Activated CD8-positive, alpha-beta T cell treated with anti-CD3 and anti-CD28 coated beads for 36 hours (primary cell): ENCODE measurements at regions of chr15 and their contacts with region 1.

Region 1: GRCh38 chr15:100349696-100350433 is 8.1 kb upstream of the ADAMTS17 start:
- DNase-seq: peak; percentile 90
- ATAC-seq: peak; percentile 94
- H3K4me3 Mint-ChIP-seq: peak overlapping the region; percentile 85
- H3K27ac Mint-ChIP-seq: peak overlapping the region; percentile 92
- H3K4me1 Mint-ChIP-seq: peaks cover 5% of the 10 kb centered on the region
- H3K27me3 Mint-ChIP-seq: peaks cover 10% of the 10 kb centered on the region
- CTCF ChIP-seq: peak; percentile 96

Region 2: DNA sequence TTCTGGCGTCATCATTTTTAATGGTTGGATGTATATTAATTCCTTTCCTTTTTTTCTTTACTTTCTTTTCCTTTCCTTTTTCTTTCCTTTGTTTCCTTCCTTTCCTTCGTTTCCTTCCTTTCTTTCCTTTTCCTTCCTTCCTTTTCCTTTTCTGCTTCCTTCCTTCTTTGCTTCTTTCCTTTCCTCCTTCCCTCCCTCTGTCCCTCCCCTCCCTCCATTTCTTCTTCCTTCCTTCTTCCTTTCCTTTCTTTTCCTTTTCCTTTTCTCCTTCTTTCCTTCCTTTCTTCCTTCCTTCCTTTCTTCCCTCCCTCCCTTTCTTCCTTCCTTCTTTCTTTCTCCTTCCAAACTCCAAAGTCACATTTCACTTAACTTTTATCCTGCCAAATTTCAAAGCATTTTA is 561.7 kb before region 1 on chr15:
- CTCF ChIA-PET with region 1: no interaction called
- POLR2A ChIA-PET with region 1: no interaction called
- intact Hi-C with region 1: no loop called
- DNase-seq: no peak
- ATAC-seq: no peak
- H3K4me3 Mint-ChIP-seq: no peak overlapping the region
- H3K27ac Mint-ChIP-seq: no peak overlapping the region
- H3K4me1 Mint-ChIP-seq: no peaks in the 10 kb centered on the region
- H3K27me3 Mint-ChIP-seq: peaks cover 10% of the 10 kb centered on the region
- CTCF ChIP-seq: no peak

Region 3: GRCh38 chr15:100111103-100112060 is 238.5 kb before region 1 on chr15:
- CTCF ChIA-PET with region 1: interaction called, 10 read pairs
- POLR2A ChIA-PET with region 1: no interaction called
- intact Hi-C with region 1: no loop called
- DNase-seq: peak; percentile 72
- ATAC-seq: peak; percentile 94
- H3K4me3 Mint-ChIP-seq: peak overlapping the region; percentile 44
- H3K27ac Mint-ChIP-seq: peak overlapping the region; percentile 98
- H3K4me1 Mint-ChIP-seq: peaks cover 36% of the 10 kb centered on the region
- H3K27me3 Mint-ChIP-seq: no peaks in the 10 kb centered on the region
- CTCF ChIP-seq: no peak

Region 4: GRCh38 chr15:100147828-100148227 is 202.0 kb before region 1 on chr15:
- CTCF ChIA-PET with region 1: no interaction called
- POLR2A ChIA-PET with region 1: no interaction called
- intact Hi-C with region 1: no loop called
- DNase-seq: no peak
- ATAC-seq: no peak
- H3K4me3 Mint-ChIP-seq: no peak overlapping the region
- H3K27ac Mint-ChIP-seq: no peak overlapping the region
- H3K4me1 Mint-ChIP-seq: no peaks in the 10 kb centered on the region
- H3K27me3 Mint-ChIP-seq: no peaks in the 10 kb centered on the region
- CTCF ChIP-seq: no peak

Region 5: GRCh38 chr15:100241572-100242482 is 108.0 kb before region 1 on chr15:
- CTCF ChIA-PET with region 1: no interaction called
- POLR2A ChIA-PET with region 1: no interaction called
- intact Hi-C with region 1: no loop called
- DNase-seq: no peak
- ATAC-seq: no peak
- H3K4me3 Mint-ChIP-seq: no peak overlapping the region
- H3K27ac Mint-ChIP-seq: peak overlapping the region; percentile 28
- H3K4me1 Mint-ChIP-seq: no peaks in the 10 kb centered on the region
- H3K27me3 Mint-ChIP-seq: no peaks in the 10 kb centered on the region
- CTCF ChIP-seq: no peak

Region 6: GRCh38 chr15:100279446-100279845 is 70.4 kb before region 1 on chr15:
- CTCF ChIA-PET with region 1: no interaction called
- POLR2A ChIA-PET with region 1: no interaction called
- intact Hi-C with region 1: no loop called
- DNase-seq: no peak
- ATAC-seq: no peak
- H3K4me3 Mint-ChIP-seq: no peak overlapping the region
- H3K27ac Mint-ChIP-seq: no peak overlapping the region
- H3K4me1 Mint-ChIP-seq: no peaks in the 10 kb centered on the region
- H3K27me3 Mint-ChIP-seq: no peaks in the 10 kb centered on the region
- CTCF ChIP-seq: no peak

Region 7: DNA sequence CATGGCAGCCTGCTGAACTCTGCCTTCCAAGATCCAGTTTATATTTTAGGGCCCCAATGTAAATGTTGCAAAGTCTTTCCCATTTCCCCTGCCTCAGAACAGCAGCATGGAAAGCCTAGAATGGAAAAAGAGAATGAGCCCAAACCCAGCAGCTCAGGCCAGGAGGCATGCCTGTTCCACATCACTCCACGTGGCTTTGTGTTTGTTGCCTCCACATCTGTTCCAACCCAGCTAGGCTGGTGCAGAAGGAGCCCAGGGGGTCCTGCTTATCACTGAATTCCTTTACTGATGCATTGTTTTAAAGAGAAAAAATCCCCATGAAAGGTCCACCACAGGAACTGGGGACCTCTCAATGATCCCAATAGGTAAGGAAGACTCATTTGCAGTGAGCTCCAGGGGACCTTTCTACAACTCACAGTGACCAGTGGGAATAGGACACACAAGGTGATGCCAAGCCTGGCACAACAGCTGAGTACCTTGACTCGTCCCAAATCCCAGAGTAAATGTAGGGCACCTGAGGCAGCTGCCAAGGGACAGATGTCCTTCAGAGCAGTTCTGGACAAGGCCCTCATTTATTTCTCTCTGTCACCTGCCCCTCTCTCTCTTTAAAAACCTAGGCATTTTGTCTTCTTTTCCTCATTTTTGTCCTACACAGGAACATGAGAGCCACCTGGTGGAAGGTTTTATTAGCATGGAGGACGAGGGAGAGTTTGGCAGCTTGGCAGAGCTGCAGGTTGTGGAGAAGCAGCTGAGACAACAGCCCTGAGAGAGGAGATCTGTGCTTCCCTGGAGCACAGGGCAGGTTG is 33.6 kb after region 1 on chr15:
- CTCF ChIA-PET with region 1: interaction called, 89 read pairs
- POLR2A ChIA-PET with region 1: no interaction called
- intact Hi-C with region 1: no loop called
- DNase-seq: peak; percentile 36
- ATAC-seq: no peak
- H3K4me3 Mint-ChIP-seq: no peak overlapping the region
- H3K27ac Mint-ChIP-seq: no peak overlapping the region
- H3K4me1 Mint-ChIP-seq: no peaks in the 10 kb centered on the region
- H3K27me3 Mint-ChIP-seq: peaks cover 6% of the 10 kb centered on the region
- CTCF ChIP-seq: peak; percentile 35

Region 8: GRCh38 chr15:100565591-100565990 is 215.7 kb after region 1 on chr15:
- CTCF ChIA-PET with region 1: interaction called, 72 read pairs
- POLR2A ChIA-PET with region 1: no interaction called
- intact Hi-C with region 1: loop called (anchors 10 kb)
- DNase-seq: no peak
- ATAC-seq: no peak
- H3K4me3 Mint-ChIP-seq: no peak overlapping the region
- H3K27ac Mint-ChIP-seq: no peak overlapping the region
- H3K4me1 Mint-ChIP-seq: peaks cover 8% of the 10 kb centered on the region
- H3K27me3 Mint-ChIP-seq: no peaks in the 10 kb centered on the region
- CTCF ChIP-seq: no peak

Region 9: GRCh38 chr15:100588638-100589242 is 238.9 kb after region 1 on chr15:
- CTCF ChIA-PET with region 1: interaction called, 16 read pairs
- POLR2A ChIA-PET with region 1: no interaction called
- intact Hi-C with region 1: no loop called
- DNase-seq: no peak
- ATAC-seq: no peak
- H3K4me3 Mint-ChIP-seq: no peak overlapping the region
- H3K27ac Mint-ChIP-seq: no peak overlapping the region
- H3K4me1 Mint-ChIP-seq: peaks cover 58% of the 10 kb centered on the region
- H3K27me3 Mint-ChIP-seq: no peaks in the 10 kb centered on the region
- CTCF ChIP-seq: no peak

Region 10: DNA sequence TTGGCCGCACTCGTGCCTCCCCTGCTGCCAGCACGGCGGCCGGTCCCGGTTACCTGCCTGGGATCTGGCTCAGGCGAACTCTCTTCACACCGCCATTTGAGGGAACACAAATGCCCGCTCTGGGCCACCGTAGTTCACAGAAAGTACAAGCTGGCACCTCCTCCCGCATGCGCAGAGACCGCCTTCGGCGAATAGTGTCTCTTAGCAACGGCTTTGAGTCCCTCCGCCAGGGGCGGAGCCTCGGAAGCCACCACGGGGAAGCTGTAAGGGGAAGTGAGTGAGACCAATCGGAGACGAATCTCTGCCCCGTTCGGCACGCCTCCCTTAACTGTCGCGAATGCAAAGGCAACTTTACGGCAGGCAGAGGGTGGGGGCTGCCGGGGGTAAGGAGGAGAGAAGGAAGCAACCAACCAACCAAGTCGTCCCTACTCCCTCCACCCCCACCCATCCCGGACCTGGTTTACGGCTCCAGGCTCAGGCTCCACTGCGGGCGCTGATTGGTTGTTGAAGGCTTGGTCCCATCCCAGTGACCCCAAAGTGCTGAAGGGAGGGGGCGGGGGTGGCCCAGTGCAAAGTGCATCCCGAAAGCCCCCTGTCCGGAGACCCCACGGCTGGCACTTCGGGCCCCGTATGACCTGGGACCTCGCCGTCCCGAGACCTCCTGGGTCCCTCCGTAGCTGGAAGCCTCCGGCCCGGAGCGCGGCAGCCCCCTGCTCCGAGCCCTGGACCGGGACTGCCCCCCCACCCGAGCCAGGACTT is 252.4 kb after region 1 on chr15 and contains the starts of genes ASB7 and LINS1:
- CTCF ChIA-PET with region 1: interaction called, 43 read pairs
- POLR2A ChIA-PET with region 1: no interaction called
- intact Hi-C with region 1: no loop called
- DNase-seq: peak; percentile 99
- ATAC-seq: peak; percentile 87
- H3K4me3 Mint-ChIP-seq: no peak within 1 kb of the TSS
- H3K27ac Mint-ChIP-seq: no peak within 1 kb of the TSS
- H3K4me1 Mint-ChIP-seq: peaks cover 58% of the 10 kb centered on the region
- H3K27me3 Mint-ChIP-seq: no peaks in the 10 kb centered on the region
- CTCF ChIP-seq: no peak
- total RNA-seq, gene ASB7: 15.7 to 18.4 TPM
- total RNA-seq, gene LINS1: 28.7 to 29.4 TPM

Region 11: DNA sequence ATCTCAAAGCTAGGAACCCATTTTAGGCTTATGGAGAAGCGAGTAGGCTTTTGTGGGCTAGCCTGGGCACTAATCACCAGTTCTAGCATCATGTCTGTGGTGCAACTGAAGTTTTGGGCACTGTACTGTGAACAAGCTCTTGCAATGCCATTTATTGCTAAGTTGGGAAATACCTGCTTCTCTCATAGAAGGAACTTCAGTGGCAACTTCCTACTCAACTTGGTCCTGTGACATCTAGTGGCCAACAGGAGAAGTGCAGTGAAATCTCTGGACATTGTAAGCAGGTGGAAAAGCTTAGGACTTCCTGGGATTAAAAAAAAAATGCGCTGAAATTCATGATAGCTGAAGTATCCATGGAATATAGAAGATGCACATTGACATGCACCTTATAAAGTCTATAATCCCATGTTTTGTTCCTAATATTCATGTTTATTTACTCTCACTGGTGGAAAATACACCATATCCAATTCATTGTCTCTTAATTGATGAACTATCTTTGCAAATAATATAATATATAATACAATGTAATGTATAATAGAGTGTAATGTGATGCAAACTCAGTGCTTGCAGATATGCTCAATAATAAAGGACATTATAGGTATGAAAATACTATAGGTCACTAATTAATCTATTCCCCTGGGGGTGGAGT is 523.3 kb after region 1 on chr15:
- CTCF ChIA-PET with region 1: interaction called, 14 read pairs
- POLR2A ChIA-PET with region 1: no interaction called
- intact Hi-C with region 1: loop called (anchors 5 kb)
- DNase-seq: peak; percentile 63
- ATAC-seq: peak; percentile 74
- H3K4me3 Mint-ChIP-seq: no peak overlapping the region
- H3K27ac Mint-ChIP-seq: no peak overlapping the region
- H3K4me1 Mint-ChIP-seq: no peaks in the 10 kb centered on the region
- H3K27me3 Mint-ChIP-seq: peaks cover 23% of the 10 kb centered on the region
- CTCF ChIP-seq: peak; percentile 86